ENCODE measurements at regions of chr10 and their contacts with region 1.

Region 1: DNA sequence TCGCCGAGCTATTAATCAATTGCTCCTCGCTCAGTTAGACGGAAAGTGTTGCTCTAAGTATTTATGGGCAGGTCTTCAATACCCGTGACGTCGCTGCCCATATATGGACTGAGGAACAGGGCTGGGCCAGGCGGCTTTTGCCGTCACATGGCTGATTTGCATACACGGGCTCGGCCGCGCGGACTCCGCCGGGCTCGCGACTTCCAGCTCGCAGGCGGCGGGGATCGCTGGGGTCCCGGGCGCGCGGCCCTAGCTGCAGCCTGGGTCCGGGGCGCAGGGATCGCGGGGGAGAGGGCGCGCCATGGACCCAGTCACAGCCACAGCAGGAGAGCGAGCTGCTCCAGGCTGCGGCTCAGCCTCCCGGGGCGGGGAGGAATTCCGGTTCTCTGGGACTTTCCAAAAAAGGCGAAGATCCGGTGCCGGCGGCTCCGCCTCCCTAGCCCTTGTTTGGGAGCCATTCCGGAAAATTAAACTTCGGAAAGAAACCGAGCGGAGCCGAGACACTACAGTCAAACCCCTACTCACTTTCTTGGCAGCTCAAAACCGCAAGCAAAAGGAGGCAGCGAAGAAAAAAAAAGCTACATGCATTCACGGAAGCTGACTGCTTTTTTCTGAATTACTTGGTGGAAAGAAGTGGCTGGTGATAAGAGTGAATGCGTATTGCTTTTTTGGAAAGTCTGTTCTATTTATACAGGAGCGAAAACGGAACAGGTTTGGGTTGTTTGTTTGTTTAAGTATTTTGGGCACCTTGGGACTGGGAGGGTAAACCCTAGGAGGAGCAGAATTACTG is at the start of gene EGR2:
- DNase-seq: peak; percentile 93
- H3K4me3 ChIP-seq: peak within 1 kb of the TSS; percentile 63 to 73 (median 66)
- H3K27ac ChIP-seq: peak within 1 kb of the TSS; percentile 70
- H3K4me1 ChIP-seq: peaks cover 35% of the 10 kb centered on the region
- H3K27me3 ChIP-seq: peaks cover 8% of the 10 kb centered on the region
- CTCF ChIP-seq: no peak
- total RNA-seq, gene EGR2: 0.64 to 1.2 TPM

Region 2: GRCh38 chr10:62268399-62269114 is 548.0 kb before region 1 on chr10 and contains the start of gene RTKN2:
- CTCF ChIA-PET with region 1: no interaction called
- dilution Hi-C with region 1: no loop called
- in situ Hi-C with region 1: no loop called
- intact Hi-C with region 1: loop called (anchors 5 kb)
- DNase-seq: peak; percentile 88
- H3K4me3 ChIP-seq: peak within 1 kb of the TSS; percentile 67 to 93 (median 90)
- H3K27ac ChIP-seq: peak within 1 kb of the TSS; percentile 33
- H3K4me1 ChIP-seq: peaks cover 29% of the 10 kb centered on the region
- H3K27me3 ChIP-seq: no peaks in the 10 kb centered on the region
- CTCF ChIP-seq: no peak
- total RNA-seq, gene RTKN2: 2.7 to 4.5 TPM

Region 3: GRCh38 chr10:62594093-62594520 is 222.4 kb before region 1 on chr10:
- CTCF ChIA-PET with region 1: no interaction called
- dilution Hi-C with region 1: no loop called
- in situ Hi-C with region 1: no loop called
- intact Hi-C with region 1: loop called (anchors 1 kb)
- DNase-seq: peak; percentile 51
- H3K4me3 ChIP-seq: no peak overlapping the region
- H3K27ac ChIP-seq: no peak overlapping the region
- H3K4me1 ChIP-seq: peaks cover 4% of the 10 kb centered on the region
- H3K27me3 ChIP-seq: no peaks in the 10 kb centered on the region
- CTCF ChIP-seq: peak; percentile 92 to 96

Region 4: DNA sequence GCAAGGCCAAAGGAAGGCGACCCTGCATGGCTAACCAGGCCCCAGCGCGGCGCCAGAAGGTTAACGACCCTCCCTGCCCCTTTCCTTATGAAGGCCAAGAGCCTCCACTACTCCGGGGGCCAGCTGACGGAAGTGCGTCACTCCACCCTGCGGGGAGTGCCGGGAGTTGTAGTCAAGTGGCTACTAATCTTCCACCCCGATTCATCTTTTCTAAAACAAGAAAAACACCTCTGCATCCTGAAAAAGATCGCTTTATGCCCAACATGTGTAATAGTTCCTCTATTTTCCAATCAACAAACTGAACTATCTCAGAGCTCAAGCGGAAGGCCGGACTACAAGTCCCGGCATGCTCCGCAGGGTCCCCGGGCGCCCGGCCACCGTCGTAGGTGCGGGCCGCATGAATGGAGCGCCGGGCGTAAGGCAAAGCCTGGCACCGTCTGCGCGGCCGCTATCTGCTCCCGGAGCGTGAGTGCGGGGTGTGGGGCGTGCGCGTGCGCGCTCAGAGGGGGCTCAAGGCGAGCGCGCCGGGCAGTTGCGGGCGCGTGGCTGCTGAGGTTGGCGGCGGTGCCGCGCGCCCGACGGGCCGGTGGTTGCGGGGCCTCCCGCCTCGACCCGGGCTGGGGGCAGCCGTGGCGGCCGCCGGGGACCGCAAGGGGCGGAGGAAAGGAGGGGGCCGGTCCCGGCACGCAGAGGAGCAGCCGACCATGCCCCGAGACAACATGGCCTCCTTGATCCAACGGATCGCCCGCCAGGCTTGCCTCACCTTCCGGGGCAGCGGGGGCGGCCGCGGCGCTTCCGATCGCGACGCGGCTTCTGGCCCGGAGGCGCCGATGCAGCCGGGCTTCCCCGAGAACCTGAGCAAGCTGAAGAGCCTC is 11.9 kb before region 1 on chr10 and contains the start of gene ADO:
- CTCF ChIA-PET with region 1: interaction called, 3 read pairs
- dilution Hi-C with region 1: no loop called
- in situ Hi-C with region 1: no loop called
- intact Hi-C with region 1: loop called (anchors 1 kb)
- DNase-seq: peak; percentile 73
- H3K4me3 ChIP-seq: peak within 1 kb of the TSS; percentile 96 to 100 (median 98)
- H3K27ac ChIP-seq: peak within 1 kb of the TSS; percentile 76
- H3K4me1 ChIP-seq: peaks cover 20% of the 10 kb centered on the region
- H3K27me3 ChIP-seq: no peaks in the 10 kb centered on the region
- CTCF ChIP-seq: no peak
- total RNA-seq, gene ADO: 22.3 to 26.5 TPM

Region 5: DNA sequence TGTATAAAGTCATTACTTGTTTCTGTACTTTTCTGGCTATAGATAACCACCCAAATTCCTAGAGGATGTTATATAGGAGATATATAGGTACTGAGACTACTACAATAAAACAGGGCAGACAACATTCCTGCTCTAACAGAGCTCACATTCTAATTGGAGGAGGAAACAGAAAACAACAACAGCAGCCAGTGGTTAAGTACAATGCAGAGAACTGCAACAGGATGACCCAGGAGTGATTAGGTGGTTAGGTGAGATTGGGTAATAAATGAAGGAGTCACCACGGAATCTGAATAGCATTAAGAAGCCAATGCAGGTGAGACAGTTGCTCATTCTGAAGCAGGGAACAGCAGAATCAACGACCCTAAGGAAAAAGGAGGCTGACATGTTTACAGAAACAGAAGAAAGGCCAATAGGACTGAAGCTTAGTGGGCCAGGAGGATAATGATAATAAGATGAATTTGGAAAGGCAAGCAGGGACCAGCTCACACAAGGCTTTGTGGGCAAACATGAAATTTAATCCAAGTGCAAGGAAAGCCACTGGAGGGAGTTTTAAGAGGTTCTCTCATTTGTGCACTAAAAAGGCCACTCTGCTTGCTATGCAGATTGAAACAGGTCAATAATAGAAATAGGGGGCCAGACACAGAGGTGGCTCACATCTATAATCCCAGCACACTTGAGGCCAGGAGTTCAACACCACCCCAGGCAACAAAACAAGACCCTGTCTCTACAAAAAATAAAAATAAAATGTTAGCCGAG is 687.8 kb after region 1 on chr10:
- CTCF ChIA-PET with region 1: interaction called, 13 read pairs
- dilution Hi-C with region 1: no loop called
- in situ Hi-C with region 1: no loop called
- intact Hi-C with region 1: no loop called
- DNase-seq: peak; percentile 90
- H3K4me3 ChIP-seq: no peak overlapping the region
- H3K27ac ChIP-seq: peak overlapping the region; percentile 32
- H3K4me1 ChIP-seq: peaks cover 18% of the 10 kb centered on the region
- H3K27me3 ChIP-seq: no peaks in the 10 kb centered on the region
- CTCF ChIP-seq: peak; percentile 3 to 19

Measured in mammary epithelial cell (primary cell).